Natural killer cell (primary cell): ENCODE measurements at regions of chr20 and their contacts with region 1.

Region 1: DNA sequence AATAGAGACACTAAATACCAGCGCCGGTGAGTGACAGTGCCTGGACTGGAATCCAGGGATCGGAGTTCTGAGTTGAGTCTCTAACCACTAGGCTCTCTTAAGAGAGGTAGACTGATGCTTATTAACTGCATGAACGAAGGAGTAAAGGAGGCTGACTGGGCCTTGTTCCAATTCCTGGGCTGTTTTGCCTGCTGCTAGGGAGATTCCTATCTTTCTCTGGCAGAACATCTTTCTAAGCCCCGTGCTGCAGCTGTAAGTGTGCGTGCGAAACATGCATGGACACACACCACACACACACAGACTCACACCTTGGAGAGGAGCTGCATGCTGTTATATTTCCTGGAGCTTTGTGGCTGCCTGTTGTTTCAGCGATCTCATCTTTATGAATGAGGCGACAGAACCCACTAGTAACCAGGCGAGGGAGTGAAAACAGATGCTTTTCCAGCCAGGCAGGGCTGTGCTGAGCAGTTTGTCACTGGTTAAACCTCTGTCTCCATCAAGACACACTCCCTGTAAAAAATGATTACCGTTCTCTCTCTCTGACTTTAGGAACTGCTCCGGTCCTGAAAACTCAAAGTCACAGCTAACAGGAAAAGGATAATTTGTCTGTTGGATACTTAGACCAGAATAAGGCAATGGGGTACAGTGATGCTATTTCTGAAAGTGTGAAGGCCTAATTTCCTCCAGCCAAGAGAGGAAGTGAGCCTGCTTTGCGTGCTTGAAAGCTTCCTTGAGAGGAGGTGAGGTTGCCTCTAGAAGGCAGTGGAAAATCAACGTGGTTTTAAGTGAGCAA is 157.4 kb upstream of the ZNF217 start:
- DNase-seq: peak; percentile 40 to 71
- ATAC-seq: peak; percentile 60 to 74 (median 63)
- H3K4me3 ChIP-seq: no peak overlapping the region
- H3K4me3 Mint-ChIP-seq: peak overlapping the region; percentile 74
- H3K27ac ChIP-seq: peak overlapping the region; percentile 80
- H3K27ac Mint-ChIP-seq: peak overlapping the region; percentile 92 to 94
- H3K4me1 ChIP-seq: peaks cover 46% of the 10 kb centered on the region
- H3K4me1 Mint-ChIP-seq: peaks cover 39 to 49% of the 10 kb centered on the region in 2 donors
- H3K27me3 ChIP-seq: no peaks in the 10 kb centered on the region
- H3K27me3 Mint-ChIP-seq: peaks cover 0 to 6% of the 10 kb centered on the region in 2 donors
- CTCF ChIP-seq: no peak

Region 2: DNA sequence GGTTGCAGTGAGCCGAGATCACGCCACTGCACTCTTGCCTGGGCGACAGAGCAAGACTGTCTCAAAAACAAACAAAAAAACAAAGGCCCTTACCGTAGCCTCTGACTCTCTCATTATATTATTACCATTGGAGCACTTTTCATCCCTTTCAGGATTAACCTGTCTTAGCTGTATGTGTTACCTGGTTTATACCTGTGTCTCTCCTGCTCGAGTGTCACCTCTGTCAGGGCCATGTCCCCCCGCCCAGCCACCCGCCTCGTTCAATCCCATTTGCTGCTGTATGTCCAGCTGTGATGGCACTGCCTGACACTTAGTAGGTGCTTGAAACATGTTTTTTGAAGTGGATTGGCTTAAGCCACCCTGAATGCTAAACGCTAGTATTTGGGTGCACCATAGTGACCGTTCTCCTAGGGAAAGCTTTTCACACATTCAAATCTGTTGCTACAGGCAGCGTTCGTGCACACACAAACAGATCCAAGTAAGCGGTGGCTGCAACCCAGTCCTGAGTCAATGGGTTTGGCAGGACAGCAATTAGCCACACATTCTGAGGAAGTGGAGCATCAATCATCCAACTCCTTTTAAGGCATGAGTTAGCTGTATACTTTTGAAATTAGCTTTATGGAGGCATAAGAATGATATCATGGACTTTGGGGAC is 58.5 kb before region 1 on chr20:
- intact Hi-C with region 1: loop called (anchors 2 kb)
- DNase-seq: no peak
- ATAC-seq: peak in 2 of 3 donors; percentile 26 to 54
- H3K4me3 ChIP-seq: no peak overlapping the region
- H3K4me3 Mint-ChIP-seq: peak overlapping the region; percentile 81
- H3K27ac ChIP-seq: peak overlapping the region; percentile 46
- H3K27ac Mint-ChIP-seq: peak overlapping the region in 1 of 2 donors; percentile 70
- H3K4me1 ChIP-seq: peaks cover 22% of the 10 kb centered on the region
- H3K4me1 Mint-ChIP-seq: peaks cover 19 to 25% of the 10 kb centered on the region in 2 donors
- H3K27me3 ChIP-seq: no peaks in the 10 kb centered on the region
- H3K27me3 Mint-ChIP-seq: peaks cover 0 to 4% of the 10 kb centered on the region in 2 donors
- CTCF ChIP-seq: no peak

Region 3: DNA sequence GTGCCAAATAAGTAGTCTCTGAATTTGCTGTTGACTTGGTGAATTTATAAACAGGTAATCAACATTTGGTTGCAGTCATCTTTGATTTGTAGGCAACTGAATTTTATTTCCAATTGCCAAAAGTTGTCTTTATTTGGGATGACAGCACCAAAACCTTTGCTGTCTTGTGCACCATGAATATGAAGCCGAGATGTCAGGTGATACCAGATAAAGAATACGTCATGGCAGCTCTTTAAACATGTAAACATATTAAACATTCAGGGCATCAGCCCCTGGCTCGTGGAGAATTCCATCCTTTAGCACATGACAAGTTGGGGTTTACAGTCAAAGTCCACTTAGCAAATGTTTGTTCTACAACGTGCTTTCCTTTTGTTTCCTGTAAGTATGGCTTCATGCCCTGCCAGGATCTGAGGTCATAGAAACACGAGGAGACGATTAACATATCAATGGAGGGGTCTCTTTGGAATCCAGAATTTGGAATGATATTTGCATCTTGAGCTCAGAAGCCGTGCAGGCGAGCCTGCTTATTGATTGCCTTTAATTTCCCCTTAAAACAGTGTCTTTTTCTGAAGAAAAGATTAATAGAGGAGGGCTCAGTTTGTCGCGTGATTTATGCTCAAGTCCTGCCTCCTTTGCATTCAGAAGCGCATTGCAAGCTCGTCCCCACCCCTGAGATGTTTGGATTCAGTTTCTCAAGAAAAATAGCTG is 12.8 kb after region 1 on chr20:
- intact Hi-C with region 1: no loop called
- DNase-seq: no peak
- ATAC-seq: no peak
- H3K4me3 ChIP-seq: no peak overlapping the region
- H3K4me3 Mint-ChIP-seq: no peak overlapping the region
- H3K27ac ChIP-seq: no peak overlapping the region
- H3K27ac Mint-ChIP-seq: no peak overlapping the region
- H3K4me1 ChIP-seq: no peaks in the 10 kb centered on the region
- H3K4me1 Mint-ChIP-seq: peaks cover 0 to 6% of the 10 kb centered on the region in 2 donors
- H3K27me3 ChIP-seq: no peaks in the 10 kb centered on the region
- H3K27me3 Mint-ChIP-seq: peaks cover under 1 to 3% of the 10 kb centered on the region in 2 donors
- CTCF ChIP-seq: no peak

Region 4: DNA sequence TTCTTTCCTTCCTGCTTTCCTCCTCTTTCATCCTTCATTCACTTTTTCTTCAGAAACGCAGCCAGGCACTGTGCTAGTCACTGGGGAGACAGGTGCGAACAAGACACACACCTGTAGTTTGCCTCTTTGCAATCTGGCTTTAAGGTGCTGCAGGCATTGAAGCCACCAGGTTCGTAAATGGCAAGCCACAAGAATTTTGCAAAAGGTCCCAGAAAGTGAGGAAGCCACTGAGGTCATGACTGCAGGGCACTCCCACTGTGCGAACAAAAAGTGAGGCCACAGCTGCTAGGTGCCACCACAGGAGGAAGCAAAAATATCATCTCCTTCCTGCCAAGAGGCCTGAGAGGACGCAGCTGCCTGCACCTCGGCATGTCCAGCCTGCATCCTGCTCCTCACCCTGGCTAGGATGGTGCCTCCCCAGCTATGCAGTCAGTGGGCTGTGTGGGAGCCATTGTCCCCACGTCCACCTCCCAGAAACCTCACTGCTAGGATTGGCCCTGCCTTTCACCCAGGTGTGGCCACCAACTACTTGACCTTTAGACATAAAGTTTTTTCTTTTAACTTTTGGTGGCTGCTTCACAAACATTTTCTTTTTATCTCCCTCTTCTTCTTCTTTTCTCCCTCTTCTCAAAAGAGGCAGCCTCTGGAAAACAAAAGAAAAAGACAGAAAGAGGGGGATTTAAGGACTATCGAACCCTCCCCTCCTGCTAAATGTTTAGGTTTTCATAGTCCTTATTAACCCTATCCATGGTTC is 88.6 kb after region 1 on chr20:
- intact Hi-C with region 1: loop called (anchors 1 kb)
- DNase-seq: peak; percentile 61 to 85
- ATAC-seq: peak; percentile 51 to 82 (median 74)
- H3K4me3 ChIP-seq: no peak overlapping the region
- H3K4me3 Mint-ChIP-seq: peak overlapping the region; percentile 96
- H3K27ac ChIP-seq: peak overlapping the region; percentile 69
- H3K27ac Mint-ChIP-seq: peak overlapping the region; percentile 84 to 89
- H3K4me1 ChIP-seq: peaks cover 84% of the 10 kb centered on the region
- H3K4me1 Mint-ChIP-seq: peaks cover 72% of the 10 kb centered on the region in 2 donors
- H3K27me3 ChIP-seq: no peaks in the 10 kb centered on the region
- H3K27me3 Mint-ChIP-seq: no peaks in the 10 kb centered on the region
- CTCF ChIP-seq: no peak

Region 5: DNA sequence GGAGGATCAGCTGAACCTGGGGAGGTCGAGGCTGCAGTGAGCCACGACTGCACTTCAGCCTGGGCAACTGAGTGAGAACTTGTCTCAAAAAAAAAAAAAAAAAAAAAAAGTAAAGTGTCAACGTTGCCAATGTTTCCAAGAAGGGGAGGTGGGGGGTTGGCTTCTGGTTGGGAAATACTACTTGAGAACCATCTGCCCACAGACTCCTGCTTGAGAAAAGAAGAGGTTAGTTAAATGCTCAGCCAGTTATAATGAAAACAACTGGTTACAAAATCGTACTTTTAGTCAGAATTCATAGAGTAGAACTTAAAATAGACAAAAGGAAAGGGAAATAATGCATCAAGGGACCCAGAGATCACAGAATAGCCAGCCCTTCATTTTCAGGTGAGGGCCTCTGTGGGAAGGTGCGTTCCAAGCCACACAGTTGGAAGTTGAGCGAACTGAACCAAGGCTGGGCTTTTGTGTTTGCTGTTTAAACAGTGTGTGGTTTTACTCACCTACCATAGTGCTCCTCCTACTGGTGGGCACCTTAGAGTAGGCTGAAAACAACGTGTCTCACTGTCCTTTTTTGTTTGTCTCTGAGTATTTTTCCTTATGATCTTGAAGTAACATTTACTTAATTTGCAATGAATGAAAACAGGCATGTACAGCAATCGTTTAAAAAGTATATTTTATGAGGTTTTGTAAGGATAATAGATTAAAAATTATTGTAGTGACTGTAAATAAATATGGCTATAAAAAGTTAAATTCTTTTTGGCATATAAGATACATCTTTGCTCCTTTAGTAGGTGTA is 118.6 kb after region 1 on chr20:
- intact Hi-C with region 1: loop called (anchors 5 kb)
- DNase-seq: peak; percentile 41 to 90
- ATAC-seq: peak; percentile 86 to 88 (median 87)
- H3K4me3 ChIP-seq: no peak overlapping the region
- H3K4me3 Mint-ChIP-seq: peak overlapping the region; percentile 50
- H3K27ac ChIP-seq: peak overlapping the region; percentile 40
- H3K27ac Mint-ChIP-seq: peak overlapping the region; percentile 69 to 79
- H3K4me1 ChIP-seq: peaks cover 37% of the 10 kb centered on the region
- H3K4me1 Mint-ChIP-seq: peaks cover 54 to 63% of the 10 kb centered on the region in 2 donors
- H3K27me3 ChIP-seq: no peaks in the 10 kb centered on the region
- H3K27me3 Mint-ChIP-seq: no peaks in the 10 kb centered on the region
- CTCF ChIP-seq: peak; percentile 84

Region 6: DNA sequence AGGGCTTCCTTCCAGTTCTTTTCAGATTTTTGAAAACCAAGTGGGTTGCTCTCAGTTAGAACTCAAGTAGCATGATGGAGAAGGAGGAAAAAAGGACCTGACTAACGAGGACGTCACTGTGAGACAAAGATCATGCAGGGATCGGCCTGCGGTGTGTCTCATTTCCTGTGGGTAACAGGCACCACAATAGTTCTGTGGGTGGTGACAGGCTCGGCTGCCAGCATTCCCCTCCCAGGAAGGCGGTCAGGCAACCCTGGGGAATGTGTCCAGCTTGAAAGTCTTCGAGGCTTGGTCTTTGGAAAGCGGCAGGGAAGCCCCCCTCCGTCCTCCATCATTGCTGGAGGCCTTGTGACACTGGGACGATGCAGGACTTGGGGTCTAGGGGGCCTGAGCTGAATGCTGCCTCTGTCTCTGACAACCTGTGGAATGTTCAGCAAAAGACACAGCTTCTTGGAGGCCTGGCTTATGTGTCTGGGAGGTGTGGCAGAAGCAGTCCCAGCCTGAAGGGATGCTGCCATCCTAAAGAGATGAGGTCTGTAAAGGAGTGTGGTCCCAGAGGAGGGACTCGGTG is 198.4 kb after region 1 on chr20:
- intact Hi-C with region 1: loop called (anchors 5 kb)
- DNase-seq: peak; percentile 75 to 93
- ATAC-seq: peak; percentile 86 to 96 (median 88)
- H3K4me3 ChIP-seq: no peak overlapping the region
- H3K4me3 Mint-ChIP-seq: peak overlapping the region; percentile 89
- H3K27ac ChIP-seq: peak overlapping the region; percentile 75
- H3K27ac Mint-ChIP-seq: peak overlapping the region; percentile 93 to 95
- H3K4me1 ChIP-seq: peaks cover 29% of the 10 kb centered on the region
- H3K4me1 Mint-ChIP-seq: peaks cover 30 to 39% of the 10 kb centered on the region in 2 donors
- H3K27me3 ChIP-seq: no peaks in the 10 kb centered on the region
- H3K27me3 Mint-ChIP-seq: peaks cover 4 to 14% of the 10 kb centered on the region in 2 donors
- CTCF ChIP-seq: no peak